Vagina (tissue), 2 donors: ENCODE measurements at regions of chr14 and their contacts with region 1.

Region 1: GRCh38 chr14:70000601-70001000 is 121.4 kb downstream of the SMOC1 start:
- DNase-seq: no peak
- H3K4me3 ChIP-seq: no peak overlapping the region
- H3K27ac ChIP-seq: no peak overlapping the region
- H3K4me1 ChIP-seq: no peaks in the 10 kb centered on the region
- H3K27me3 ChIP-seq: no peaks in the 10 kb centered on the region
- CTCF ChIP-seq: no peak
- POLR2A ChIP-seq: no peak

Region 2: DNA sequence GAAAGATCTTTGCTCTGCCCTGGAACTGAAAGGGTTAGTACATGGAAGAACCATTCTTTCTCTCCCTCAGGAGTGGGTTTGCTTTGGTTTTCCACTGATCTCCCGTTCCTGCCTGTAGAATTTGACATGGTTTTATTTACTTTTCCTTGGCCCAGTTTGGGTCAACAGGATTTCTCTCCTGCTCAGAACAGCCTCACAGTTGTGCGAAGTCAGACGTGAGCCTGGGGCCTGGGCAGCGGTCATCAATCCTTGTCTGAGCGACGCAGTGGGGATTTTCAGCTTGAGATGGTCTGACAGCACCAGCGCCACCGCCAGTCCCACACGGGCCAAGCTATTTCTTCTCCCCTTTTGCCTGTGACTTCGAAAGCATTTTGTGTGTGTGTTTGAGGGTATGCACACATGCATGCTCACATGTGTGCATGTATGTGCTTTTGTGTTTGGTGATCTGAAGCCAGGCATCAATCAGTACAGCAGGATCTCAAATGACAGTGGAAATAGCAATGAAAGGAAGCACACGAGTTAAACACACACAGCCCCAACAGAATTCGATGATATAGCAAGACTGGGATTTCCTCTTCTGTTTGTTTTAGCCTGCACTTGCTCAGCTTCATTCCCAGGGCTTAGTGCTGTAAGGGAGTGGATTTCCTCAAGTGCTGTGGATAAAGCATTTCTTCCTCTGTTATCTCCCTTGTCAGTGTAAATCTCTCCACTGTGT is 63.1 kb before region 1 on chr14:
- intact Hi-C with region 1: loop called (anchors 5 kb)
- DNase-seq: no peak
- H3K4me3 ChIP-seq: no peak overlapping the region
- H3K27ac ChIP-seq: no peak overlapping the region
- H3K4me1 ChIP-seq: no peaks in the 10 kb centered on the region
- H3K27me3 ChIP-seq: no peaks in the 10 kb centered on the region
- CTCF ChIP-seq: no peak
- POLR2A ChIP-seq: no peak